ENCODE measurements at regions of chr9 and their contacts with region 1.

Region 1: DNA sequence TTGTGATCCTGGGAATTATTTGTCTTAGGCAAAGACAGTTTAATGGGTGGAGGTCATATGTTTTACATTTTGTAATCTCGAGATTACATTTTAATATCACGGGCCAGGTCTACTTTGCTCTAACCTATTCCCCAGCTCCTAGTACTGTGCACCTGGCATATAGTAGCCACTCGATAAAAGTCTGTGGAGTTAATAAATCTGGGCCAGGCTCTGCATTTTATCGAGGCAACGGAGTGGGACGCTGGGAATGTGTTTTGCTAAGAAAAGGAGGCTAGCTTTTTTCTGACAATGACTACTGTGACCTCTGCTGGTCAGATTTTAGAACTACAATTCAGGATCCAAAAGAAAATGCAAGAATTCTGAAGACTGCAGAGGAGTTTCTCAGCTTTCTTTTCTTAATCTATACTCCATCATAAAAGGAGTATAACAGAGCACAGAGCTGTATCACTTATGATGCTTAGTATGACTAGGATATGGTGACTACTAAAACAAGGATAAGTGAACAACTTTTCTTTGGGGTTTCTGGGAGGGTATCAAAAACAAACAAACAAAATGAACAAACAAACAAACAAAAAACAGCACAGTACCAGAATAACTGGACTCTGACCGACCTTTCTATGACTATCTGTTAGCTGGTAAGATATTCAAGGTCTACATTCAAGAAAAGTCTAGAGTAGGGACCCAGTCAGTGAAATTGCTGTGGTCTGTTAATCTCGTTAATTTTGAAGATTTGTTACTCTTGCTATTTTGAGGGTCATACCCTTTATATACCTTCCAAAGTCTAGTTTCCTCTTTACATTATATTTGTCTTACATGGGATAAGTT is 46.1 kb upstream of the CER1 start:
- DNase-seq: no peak
- H3K4me3 Mint-ChIP-seq: no peak overlapping the region
- H3K27ac Mint-ChIP-seq: no peak overlapping the region
- H3K4me1 Mint-ChIP-seq: peaks cover 2% of the 10 kb centered on the region
- H3K27me3 Mint-ChIP-seq: peaks cover 15% of the 10 kb centered on the region

Region 2: DNA sequence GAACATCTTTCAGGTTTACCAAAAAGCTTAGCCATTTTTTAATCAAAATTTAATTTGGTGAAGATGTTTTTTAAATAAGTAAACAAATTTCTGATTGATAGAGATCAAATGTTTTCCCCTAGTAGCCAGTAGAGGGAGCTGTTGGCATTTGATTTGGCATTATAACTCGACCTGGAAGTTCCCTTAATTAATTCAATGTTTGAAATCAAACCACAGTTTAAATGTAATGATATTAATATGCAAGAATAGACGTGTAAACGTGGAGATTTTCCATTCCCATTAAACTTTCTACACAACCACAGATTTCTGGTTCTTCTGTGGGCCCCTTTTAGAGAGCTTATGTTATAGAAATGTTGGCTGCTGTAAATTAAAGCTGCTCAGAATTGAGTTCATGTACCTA is 1341.0 kb before region 1 on chr9:
- CTCF ChIA-PET with region 1: interaction called, 4 read pairs
- intact Hi-C with region 1: loop called (anchors 5 kb)
- DNase-seq: no peak
- H3K4me3 Mint-ChIP-seq: no peak overlapping the region
- H3K27ac Mint-ChIP-seq: no peak overlapping the region
- H3K4me1 Mint-ChIP-seq: no peaks in the 10 kb centered on the region
- H3K27me3 Mint-ChIP-seq: peaks cover 2% of the 10 kb centered on the region

Region 3: GRCh38 chr9:14441976-14442651 is 326.5 kb before region 1 on chr9:
- CTCF ChIA-PET with region 1: no interaction called
- intact Hi-C with region 1: loop called (anchors 1 kb)
- DNase-seq: no peak
- H3K4me3 Mint-ChIP-seq: no peak overlapping the region
- H3K27ac Mint-ChIP-seq: no peak overlapping the region
- H3K4me1 Mint-ChIP-seq: no peaks in the 10 kb centered on the region
- H3K27me3 Mint-ChIP-seq: peaks cover 9% of the 10 kb centered on the region

Region 4: DNA sequence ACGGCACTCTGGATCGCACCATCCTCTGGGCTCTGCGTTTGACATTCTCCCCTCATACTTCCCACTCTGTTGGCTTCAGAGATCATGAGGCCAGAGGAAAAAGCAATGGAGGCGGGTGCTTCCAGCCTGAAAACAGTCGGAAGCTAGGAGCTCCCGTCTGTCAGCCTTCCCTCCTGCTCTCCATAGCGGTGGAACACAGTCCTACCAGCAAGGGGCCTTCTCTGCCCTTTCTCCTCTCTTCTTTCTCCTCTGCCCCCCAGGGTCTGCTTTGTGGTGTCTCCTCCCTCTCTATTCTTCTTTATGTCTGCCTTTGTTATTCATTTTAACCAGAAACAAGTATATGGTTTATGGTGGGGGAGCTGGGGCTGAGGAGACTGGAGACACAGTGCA is 302.2 kb before region 1 on chr9:
- CTCF ChIA-PET with region 1: interaction called, 6 read pairs
- intact Hi-C with region 1: loop called (anchors 1 kb)
- DNase-seq: no peak
- H3K4me3 Mint-ChIP-seq: no peak overlapping the region
- H3K27ac Mint-ChIP-seq: no peak overlapping the region
- H3K4me1 Mint-ChIP-seq: no peaks in the 10 kb centered on the region
- H3K27me3 Mint-ChIP-seq: no peaks in the 10 kb centered on the region

Region 5: GRCh38 chr9:14616188-14616982 is 152.2 kb before region 1 on chr9:
- CTCF ChIA-PET with region 1: interaction called, 18 read pairs
- intact Hi-C with region 1: loop called (anchors 1 kb)
- DNase-seq: no peak
- H3K4me3 Mint-ChIP-seq: no peak overlapping the region
- H3K27ac Mint-ChIP-seq: no peak overlapping the region
- H3K4me1 Mint-ChIP-seq: no peaks in the 10 kb centered on the region
- H3K27me3 Mint-ChIP-seq: no peaks in the 10 kb centered on the region